ENCODE measurements at regions of chr22 and their contacts with region 1.

Region 1: DNA sequence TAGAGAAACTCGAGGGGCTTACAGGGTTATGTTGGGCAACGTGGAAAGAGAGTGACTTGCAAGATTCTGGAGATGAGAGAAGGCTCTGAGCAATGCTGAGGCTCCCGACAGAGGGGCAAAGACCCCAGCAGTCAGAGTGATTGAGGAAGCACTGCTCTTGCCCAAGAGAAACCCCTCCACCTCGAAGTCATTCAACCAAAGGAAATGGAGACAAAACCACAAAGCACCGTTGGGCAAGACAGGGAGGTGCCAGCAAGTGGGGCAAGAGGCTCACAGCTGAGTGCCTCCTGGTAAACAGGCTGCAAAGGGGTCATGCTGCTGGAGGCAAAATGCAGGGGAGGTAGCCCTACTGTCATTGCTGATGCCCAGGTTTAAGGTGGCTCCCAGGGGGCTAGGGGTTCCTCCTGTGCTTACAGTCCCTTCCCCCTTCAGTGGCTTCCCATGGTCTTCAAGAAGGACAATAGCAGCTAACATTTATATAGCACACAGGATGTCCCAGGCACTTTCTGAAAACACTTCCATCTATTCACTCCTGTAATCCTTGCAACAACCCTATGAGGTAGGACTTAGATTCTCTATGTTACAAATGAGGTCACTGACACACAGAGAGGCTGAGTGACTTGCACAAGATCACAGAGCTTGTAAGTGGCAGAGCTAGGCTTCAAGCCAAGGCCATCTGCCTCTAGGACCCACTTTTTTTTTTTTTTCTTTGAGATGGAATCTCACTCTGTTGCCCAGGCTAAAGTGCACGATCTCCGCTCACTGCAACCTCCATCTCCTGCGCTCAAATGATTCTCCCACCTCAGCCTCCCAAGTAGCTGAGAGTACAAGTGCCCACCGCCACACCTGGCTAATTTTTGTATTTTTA is 18.1 kb upstream of the MYH9 start:
- DNase-seq: peak; percentile 67
- H3K4me3 Mint-ChIP-seq: no peak overlapping the region
- H3K27ac Mint-ChIP-seq: peak overlapping the region; percentile 76
- H3K4me1 Mint-ChIP-seq: peaks cover 38% of the 10 kb centered on the region
- H3K27me3 Mint-ChIP-seq: no peaks in the 10 kb centered on the region

Region 2: GRCh38 chr22:36387752-36388518 is 18.0 kb before region 1 on chr22 and contains the start of gene MYH9:
- CTCF ChIA-PET with region 1: no interaction called
- intact Hi-C with region 1: no loop called
- DNase-seq: peak; percentile 100
- H3K4me3 Mint-ChIP-seq: peak within 1 kb of the TSS; percentile 83
- H3K27ac Mint-ChIP-seq: peak within 1 kb of the TSS; percentile 96
- H3K4me1 Mint-ChIP-seq: peaks cover 25% of the 10 kb centered on the region
- H3K27me3 Mint-ChIP-seq: no peaks in the 10 kb centered on the region
- total RNA-seq, gene MYH9: 574 to 625 TPM

Region 3: GRCh38 chr22:36435516-36436415 is 29.9 kb after region 1 on chr22:
- CTCF ChIA-PET with region 1: no interaction called
- intact Hi-C with region 1: loop called (anchors 2 kb)
- DNase-seq: peak; percentile 86
- H3K4me3 Mint-ChIP-seq: peak overlapping the region; percentile 49
- H3K27ac Mint-ChIP-seq: peak overlapping the region; percentile 85
- H3K4me1 Mint-ChIP-seq: peaks cover 42% of the 10 kb centered on the region
- H3K27me3 Mint-ChIP-seq: no peaks in the 10 kb centered on the region

Region 4: DNA sequence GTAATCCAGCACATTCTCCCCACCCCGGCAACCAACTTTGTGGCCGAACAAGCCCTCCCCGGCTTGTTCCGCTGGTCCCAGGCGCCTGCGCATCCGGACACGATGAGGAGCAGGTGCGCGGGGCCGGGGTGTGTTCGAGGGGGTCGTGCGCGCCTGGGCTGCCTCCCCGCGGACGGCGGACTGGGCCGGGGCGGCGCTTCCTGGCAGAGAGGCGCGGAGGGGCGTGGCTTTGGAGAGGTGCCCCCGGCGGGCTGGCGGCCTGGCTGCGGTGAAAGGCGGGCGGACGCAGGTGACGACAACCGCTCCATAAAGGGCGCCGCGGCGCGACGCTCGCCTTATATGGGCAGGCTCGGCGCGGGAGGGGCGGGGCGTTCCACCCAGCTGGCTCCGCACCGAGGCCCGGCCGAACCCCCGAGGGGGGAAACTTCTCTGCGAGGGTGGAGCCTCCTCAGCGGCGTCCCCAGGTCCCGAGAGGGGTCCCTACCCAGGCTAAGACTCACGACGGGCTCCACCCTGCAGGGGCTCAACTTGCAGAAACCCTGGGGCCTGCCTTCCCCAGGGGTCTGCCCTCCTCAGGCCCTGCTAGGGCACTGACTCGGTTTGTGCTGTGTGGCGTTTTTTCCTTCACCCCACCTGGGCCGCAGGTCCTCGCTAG is 49.1 kb after region 1 on chr22:
- CTCF ChIA-PET with region 1: interaction called, 4 read pairs
- intact Hi-C with region 1: loop called (anchors 1 kb)
- DNase-seq: peak; percentile 96
- H3K4me3 Mint-ChIP-seq: peak overlapping the region; percentile 76
- H3K27ac Mint-ChIP-seq: peak overlapping the region; percentile 75
- H3K4me1 Mint-ChIP-seq: peaks cover 37% of the 10 kb centered on the region
- H3K27me3 Mint-ChIP-seq: no peaks in the 10 kb centered on the region

Region 5: GRCh38 chr22:36470162-36470993 is 64.5 kb after region 1 on chr22:
- CTCF ChIA-PET with region 1: interaction called, 4 read pairs
- intact Hi-C with region 1: loop called (anchors 1 kb)
- DNase-seq: peak; percentile 90
- H3K4me3 Mint-ChIP-seq: no peak overlapping the region
- H3K27ac Mint-ChIP-seq: peak overlapping the region; percentile 46
- H3K4me1 Mint-ChIP-seq: peaks cover 30% of the 10 kb centered on the region
- H3K27me3 Mint-ChIP-seq: no peaks in the 10 kb centered on the region